ENCODE measurements at regions of chr5 and their contacts with region 1.

Region 1: GRCh38 chr5:14685757-14686156 is 21.2 kb downstream of the OTULIN start:
- DNase-seq: peak; percentile 56 to 62
- ATAC-seq: peak; percentile 89 to 92
- H3K4me3 ChIP-seq: no peak overlapping the region
- H3K27ac ChIP-seq: no peak overlapping the region
- H3K4me1 ChIP-seq: 0 out of 3 replicates have a peak, but pooled peaks cover 3% of the 10 kb centered on the region
- CTCF ChIP-seq: peak; percentile 73
- EP300 ChIP-seq: no peak
- POLR2A ChIP-seq: no peak
- RAD21 ChIP-seq: peak; percentile 76 to 78

Region 2: DNA sequence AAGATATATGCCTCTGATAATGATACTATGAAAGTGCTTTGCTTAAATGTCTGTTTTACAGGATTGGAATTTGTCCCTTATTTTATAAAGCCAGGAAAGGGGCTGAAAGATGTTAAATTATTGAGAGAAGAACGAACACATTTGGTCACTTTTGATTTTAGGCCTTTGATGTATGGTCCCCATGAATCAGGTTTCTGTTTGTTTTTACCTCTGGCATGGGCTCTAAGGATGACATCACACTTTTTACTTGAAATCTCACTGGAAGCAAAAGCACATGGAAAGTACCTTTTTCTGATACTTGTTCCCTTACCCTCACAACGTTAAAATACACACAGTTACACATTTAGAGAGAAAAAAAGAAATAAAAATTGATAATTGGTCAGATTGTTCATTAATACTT is 14.3 kb before region 1 on chr5:
- CTCF ChIA-PET with region 1: interaction called, 25 read pairs
- POLR2A ChIA-PET with region 1: no interaction called
- DNase-seq: peak in 1 of 2 experiments; percentile 19
- ATAC-seq: peak in 1 of 2 experiments; percentile 45; a peak in 2 of 6 replicates
- H3K4me3 ChIP-seq: no peak overlapping the region
- H3K27ac ChIP-seq: peak overlapping the region in 1 of 2 experiments; percentile 60; a peak in 3 of 6 replicates
- H3K4me1 ChIP-seq: peaks cover 50% of the 10 kb centered on the region
- CTCF ChIP-seq: no peak
- EP300 ChIP-seq: no peak
- POLR2A ChIP-seq: no peak
- RAD21 ChIP-seq: no peak

Region 3: GRCh38 chr5:14696057-14696456 is 10.3 kb after region 1 on chr5:
- CTCF ChIA-PET with region 1: interaction called, 16 read pairs
- POLR2A ChIA-PET with region 1: no interaction called
- DNase-seq: peak in 1 of 2 experiments; percentile 15
- ATAC-seq: peak in 1 of 2 experiments; percentile 47; a peak in 1 of 6 replicates
- H3K4me3 ChIP-seq: no peak overlapping the region
- H3K27ac ChIP-seq: peak overlapping the region; percentile 3 to 14; a peak in 1 of 6 replicates
- H3K4me1 ChIP-seq: peaks cover 6% of the 10 kb centered on the region; the same call in 1 of the 3 replicates
- CTCF ChIP-seq: no peak
- EP300 ChIP-seq: no peak
- POLR2A ChIP-seq: no peak
- RAD21 ChIP-seq: no peak

Region 4: DNA sequence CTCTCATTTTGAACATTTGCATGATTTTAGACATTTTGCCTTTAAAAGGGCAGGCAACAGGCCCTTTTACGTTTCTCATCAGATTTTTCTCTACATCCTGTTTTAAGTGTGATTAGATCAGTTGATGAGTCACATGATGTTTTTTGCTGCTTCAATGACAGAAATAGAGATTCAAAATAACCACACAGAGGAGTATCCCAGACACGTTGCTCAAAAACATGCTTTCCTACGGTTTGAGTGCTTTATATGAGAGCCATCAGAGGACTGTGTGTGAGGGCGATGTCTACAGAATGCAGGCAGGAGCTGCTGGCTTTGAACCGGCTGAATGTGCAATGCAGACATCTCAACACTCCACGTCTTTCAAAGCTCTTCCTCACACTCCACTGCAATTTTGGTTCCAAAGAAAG is 20.9 kb after region 1 on chr5:
- CTCF ChIA-PET with region 1: interaction called, 14 read pairs
- POLR2A ChIA-PET with region 1: no interaction called
- DNase-seq: no peak
- ATAC-seq: no peak
- H3K4me3 ChIP-seq: no peak overlapping the region
- H3K27ac ChIP-seq: no peak overlapping the region
- H3K4me1 ChIP-seq: no peaks in the 10 kb centered on the region
- CTCF ChIP-seq: no peak
- EP300 ChIP-seq: no peak
- POLR2A ChIP-seq: no peak
- RAD21 ChIP-seq: no peak

Region 5: GRCh38 chr5:15003511-15003920 is 317.8 kb after region 1 on chr5:
- CTCF ChIA-PET with region 1: interaction called, 27 read pairs
- POLR2A ChIA-PET with region 1: no interaction called
- DNase-seq: peak; percentile 71 to 79
- ATAC-seq: peak; percentile 92 to 93
- H3K4me3 ChIP-seq: no peak overlapping the region
- H3K27ac ChIP-seq: 0 out of 6 replicates have a peak overlapping the region, but pooled peaks of 1 of the 2 experiments have one; percentile 14
- H3K4me1 ChIP-seq: peaks cover 15% of the 10 kb centered on the region
- CTCF ChIP-seq: peak; percentile 89
- EP300 ChIP-seq: no peak
- POLR2A ChIP-seq: no peak
- RAD21 ChIP-seq: peak; percentile 93 to 94

Region 6: GRCh38 chr5:15013654-15014463 is 328.1 kb after region 1 on chr5:
- CTCF ChIA-PET with region 1: interaction called, 28 read pairs
- POLR2A ChIA-PET with region 1: no interaction called
- DNase-seq: peak; percentile 42 to 76
- ATAC-seq: peak; percentile 85 to 89
- H3K4me3 ChIP-seq: no peak overlapping the region
- H3K27ac ChIP-seq: peak overlapping the region; percentile 39 to 73; a peak in 5 of 6 replicates
- H3K4me1 ChIP-seq: peaks cover 46% of the 10 kb centered on the region
- CTCF ChIP-seq: peak; percentile 82
- EP300 ChIP-seq: no peak
- POLR2A ChIP-seq: no peak
- RAD21 ChIP-seq: peak; percentile 89